ENCODE measurements at regions of chr19 and their contacts with region 1.

Region 1: DNA sequence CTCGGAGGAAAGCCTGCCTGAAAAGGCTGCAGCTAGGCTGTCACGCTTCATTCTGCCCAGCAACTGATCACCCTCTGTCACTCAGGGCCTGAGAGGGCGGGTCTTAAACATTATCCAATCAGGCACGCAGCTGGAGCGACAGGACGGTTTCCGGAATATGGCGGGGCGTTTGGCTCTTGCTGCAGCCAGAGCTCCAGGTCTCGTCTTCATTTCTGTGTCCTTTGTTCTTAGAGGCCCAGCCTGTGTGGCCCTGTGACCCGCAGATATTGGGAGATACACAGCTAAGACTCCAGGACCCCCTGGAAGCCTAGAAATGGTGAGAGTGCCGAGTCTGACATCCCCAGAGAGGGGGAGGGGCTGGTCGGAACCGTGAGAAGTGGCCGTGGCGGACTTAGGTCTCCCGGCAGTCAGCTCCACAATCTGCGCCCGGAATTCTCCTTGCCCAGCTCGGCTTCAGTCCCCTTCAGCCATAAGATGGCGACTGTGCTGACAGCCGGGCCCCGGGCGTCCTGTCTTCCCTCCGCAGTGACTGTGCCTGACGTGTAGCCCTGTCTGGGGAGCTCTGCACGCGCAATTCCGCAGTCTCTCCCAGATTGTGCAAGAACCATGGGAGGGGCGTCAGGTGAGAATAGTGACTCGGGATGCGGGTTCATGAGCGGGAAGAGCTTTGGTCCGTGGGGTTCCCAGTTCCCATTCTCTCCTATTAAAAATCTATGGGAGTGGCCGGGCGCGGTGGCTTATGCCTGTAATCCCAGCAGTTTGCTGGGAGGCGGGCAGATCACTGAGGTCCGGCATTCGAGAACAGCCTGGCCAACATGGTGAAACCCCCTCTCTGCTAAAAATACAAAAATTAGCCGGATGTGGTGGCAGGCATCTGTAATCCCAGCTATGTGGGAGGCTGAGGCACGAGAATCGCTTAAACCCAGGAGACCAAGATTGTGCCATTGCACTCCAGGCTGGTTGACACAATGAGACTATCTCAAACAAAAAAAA is at the start of gene ZNF429:
- DNase-seq: peak; percentile 81 to 96 (median 91)
- ATAC-seq: peak; percentile 98
- H3K4me3 ChIP-seq: peak within 1 kb of the TSS; percentile 75 to 78
- H3K4me3 Mint-ChIP-seq: peak within 1 kb of the TSS; percentile 100
- H3K27ac ChIP-seq: peak within 1 kb of the TSS; percentile 92 to 95
- H3K27ac Mint-ChIP-seq: peak within 1 kb of the TSS; percentile 100
- H3K4me1 ChIP-seq: peaks cover 24% of the 10 kb centered on the region
- H3K4me1 Mint-ChIP-seq: peaks cover 52% of the 10 kb centered on the region
- H3K27me3 ChIP-seq: no peaks in the 10 kb centered on the region
- H3K27me3 Mint-ChIP-seq: no peaks in the 10 kb centered on the region
- CTCF ChIP-seq: no peak
- total RNA-seq, gene ZNF429: 9.6 to 11.2 TPM

Region 2: GRCh38 chr19:20565321-20566018 is 940.3 kb before region 1 on chr19 and contains the start of gene ZNF737:
- CTCF ChIA-PET with region 1: no interaction called
- POLR2A ChIA-PET with region 1: interaction called, 11 read pairs
- intact Hi-C with region 1: no loop called
- DNase-seq: peak; percentile 87 to 97 (median 93)
- ATAC-seq: peak; percentile 95
- H3K4me3 ChIP-seq: peak within 1 kb of the TSS; percentile 80 to 92
- H3K4me3 Mint-ChIP-seq: peak within 1 kb of the TSS; percentile 99
- H3K27ac ChIP-seq: peak within 1 kb of the TSS; percentile 81 to 91
- H3K27ac Mint-ChIP-seq: peak within 1 kb of the TSS; percentile 99
- H3K4me1 ChIP-seq: no peaks in the 10 kb centered on the region
- H3K4me1 Mint-ChIP-seq: peaks cover 35% of the 10 kb centered on the region
- H3K27me3 ChIP-seq: no peaks in the 10 kb centered on the region
- H3K27me3 Mint-ChIP-seq: no peaks in the 10 kb centered on the region
- CTCF ChIP-seq: no peak
- total RNA-seq, gene ZNF737: 11.2 to 11.5 TPM

Region 3: GRCh38 chr19:21328885-21329605 is 176.7 kb before region 1 on chr19 and contains the start of gene ZNF708:
- CTCF ChIA-PET with region 1: no interaction called
- POLR2A ChIA-PET with region 1: interaction called, 22 read pairs
- intact Hi-C with region 1: loop called in 1 of 2 experiments (anchors 5 kb)
- DNase-seq: peak; percentile 32 to 90 (median 77)
- ATAC-seq: peak; percentile 95
- H3K4me3 ChIP-seq: peak within 1 kb of the TSS; percentile 91 to 97
- H3K4me3 Mint-ChIP-seq: peak within 1 kb of the TSS; percentile 97
- H3K27ac ChIP-seq: peak within 1 kb of the TSS; percentile 94 to 99
- H3K27ac Mint-ChIP-seq: peak within 1 kb of the TSS; percentile 98
- H3K4me1 ChIP-seq: peaks cover 17% of the 10 kb centered on the region
- H3K4me1 Mint-ChIP-seq: peaks cover 44% of the 10 kb centered on the region
- H3K27me3 ChIP-seq: no peaks in the 10 kb centered on the region
- H3K27me3 Mint-ChIP-seq: no peaks in the 10 kb centered on the region
- CTCF ChIP-seq: no peak
- total RNA-seq, gene ZNF708: 23.7 to 24.7 TPM

Region 4: DNA sequence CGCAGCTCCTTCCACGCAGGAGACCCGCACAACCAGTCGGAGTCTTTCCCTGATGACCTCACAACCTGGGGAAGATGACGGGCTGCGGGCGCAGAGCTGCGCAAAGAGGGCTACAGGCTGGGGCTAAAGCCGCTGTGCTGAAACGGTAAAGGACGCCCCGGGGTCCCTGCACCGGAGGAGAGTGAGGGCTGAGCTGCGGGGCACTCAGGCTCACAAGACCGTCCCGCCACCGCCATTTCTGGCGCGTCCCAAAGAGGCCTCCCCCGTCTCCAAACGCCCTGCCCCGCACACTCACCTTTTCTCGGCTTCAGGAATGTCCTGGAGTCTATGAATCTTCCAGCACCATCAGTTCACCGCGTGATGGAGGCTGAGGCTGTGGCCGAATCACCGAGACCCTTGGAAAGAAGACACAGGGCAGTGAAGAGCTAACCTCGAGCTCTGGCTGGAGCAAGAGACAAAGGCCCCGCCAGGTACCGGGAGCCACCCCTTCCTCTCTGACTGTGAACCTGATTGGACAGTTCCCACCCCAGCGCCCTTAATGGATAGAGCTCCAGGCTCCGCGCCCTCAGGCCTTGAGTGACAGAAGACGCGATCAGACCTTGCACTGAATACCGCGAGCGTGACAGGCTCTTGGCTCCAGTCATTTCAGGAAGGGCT is 42.2 kb before region 1 on chr19:
- CTCF ChIA-PET with region 1: no interaction called
- POLR2A ChIA-PET with region 1: no interaction called
- intact Hi-C with region 1: no loop called
- DNase-seq: peak in 4 of 9 experiments; percentile 22 to 59 (median 36)
- ATAC-seq: peak; percentile 97
- H3K4me3 ChIP-seq: peak overlapping the region in 1 of 2 experiments; percentile 41
- H3K4me3 Mint-ChIP-seq: peak overlapping the region; percentile 87
- H3K27ac ChIP-seq: no peak overlapping the region
- H3K27ac Mint-ChIP-seq: peak overlapping the region; percentile 37
- H3K4me1 ChIP-seq: no peaks in the 10 kb centered on the region
- H3K4me1 Mint-ChIP-seq: peaks cover 5% of the 10 kb centered on the region
- H3K27me3 ChIP-seq: no peaks in the 10 kb centered on the region
- H3K27me3 Mint-ChIP-seq: peaks cover 7% of the 10 kb centered on the region
- CTCF ChIP-seq: no peak

Region 5: GRCh38 chr19:21568816-21569493 is 63.2 kb after region 1 on chr19:
- CTCF ChIA-PET with region 1: interaction called, 5 read pairs
- POLR2A ChIA-PET with region 1: interaction called, 28 read pairs
- intact Hi-C with region 1: loop called (anchors 1 kb)
- DNase-seq: peak; percentile 49 to 97 (median 84)
- ATAC-seq: peak; percentile 98
- H3K4me3 ChIP-seq: peak overlapping the region; percentile 57 to 83
- H3K4me3 Mint-ChIP-seq: peak overlapping the region; percentile 97
- H3K27ac ChIP-seq: peak overlapping the region; percentile 72 to 84
- H3K27ac Mint-ChIP-seq: peak overlapping the region; percentile 99
- H3K4me1 ChIP-seq: peaks cover 4% of the 10 kb centered on the region
- H3K4me1 Mint-ChIP-seq: peaks cover 29% of the 10 kb centered on the region
- H3K27me3 ChIP-seq: no peaks in the 10 kb centered on the region
- H3K27me3 Mint-ChIP-seq: no peaks in the 10 kb centered on the region
- CTCF ChIP-seq: no peak

Region 6: DNA sequence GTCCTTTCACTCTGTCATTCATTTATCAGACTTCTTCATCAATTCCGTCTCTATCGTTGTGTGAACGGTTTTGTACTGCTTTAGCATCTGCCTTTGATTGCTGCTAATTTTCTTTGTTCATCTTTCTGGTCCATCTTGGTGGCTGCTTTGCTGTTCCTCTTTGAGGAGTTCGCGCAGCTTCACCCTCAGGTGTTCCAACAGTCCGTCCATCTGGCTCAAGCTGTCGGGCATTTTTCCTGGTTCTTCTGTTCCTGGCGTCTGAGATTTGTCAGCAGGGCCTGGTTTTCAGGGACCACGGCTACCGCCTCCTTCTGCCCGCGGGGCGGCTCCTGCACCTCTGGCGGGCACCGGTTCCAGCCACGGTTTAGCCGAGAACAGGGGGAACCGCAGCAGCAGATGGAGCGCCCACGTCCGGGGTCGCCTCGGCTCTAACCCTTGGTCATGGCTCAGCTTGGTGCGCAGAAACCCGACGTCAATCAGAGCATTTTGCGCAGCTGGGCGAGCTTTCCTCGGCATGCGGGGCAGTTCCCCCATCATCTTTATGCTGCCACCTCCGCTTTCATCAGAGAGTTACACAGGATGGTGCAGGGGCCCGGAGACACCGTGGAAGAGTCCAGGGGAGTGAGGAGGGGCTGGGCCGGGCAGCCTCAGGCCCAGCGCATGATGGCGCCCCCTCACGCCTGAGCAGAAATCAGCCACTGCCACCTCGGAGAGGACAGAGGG is 172.1 kb after region 1 on chr19:
- CTCF ChIA-PET with region 1: no interaction called
- POLR2A ChIA-PET with region 1: interaction called, 3 read pairs
- intact Hi-C with region 1: loop called in 1 of 2 experiments (anchors 1 kb)
- DNase-seq: peak in 4 of 9 experiments; percentile 1 to 49 (median 18)
- ATAC-seq: peak; percentile 44
- H3K4me3 ChIP-seq: peak overlapping the region in 1 of 2 experiments; percentile 40
- H3K4me3 Mint-ChIP-seq: peak overlapping the region; percentile 59
- H3K27ac ChIP-seq: no peak overlapping the region
- H3K27ac Mint-ChIP-seq: no peak overlapping the region
- H3K4me1 ChIP-seq: no peaks in the 10 kb centered on the region
- H3K4me1 Mint-ChIP-seq: peaks cover 6% of the 10 kb centered on the region
- H3K27me3 ChIP-seq: no peaks in the 10 kb centered on the region
- H3K27me3 Mint-ChIP-seq: peaks cover 3% of the 10 kb centered on the region
- CTCF ChIP-seq: no peak

Measured in CD8-positive, alpha-beta T cell (primary cell).